ENCODE measurements at regions of chr19 and their contacts with region 1.

Region 1: DNA sequence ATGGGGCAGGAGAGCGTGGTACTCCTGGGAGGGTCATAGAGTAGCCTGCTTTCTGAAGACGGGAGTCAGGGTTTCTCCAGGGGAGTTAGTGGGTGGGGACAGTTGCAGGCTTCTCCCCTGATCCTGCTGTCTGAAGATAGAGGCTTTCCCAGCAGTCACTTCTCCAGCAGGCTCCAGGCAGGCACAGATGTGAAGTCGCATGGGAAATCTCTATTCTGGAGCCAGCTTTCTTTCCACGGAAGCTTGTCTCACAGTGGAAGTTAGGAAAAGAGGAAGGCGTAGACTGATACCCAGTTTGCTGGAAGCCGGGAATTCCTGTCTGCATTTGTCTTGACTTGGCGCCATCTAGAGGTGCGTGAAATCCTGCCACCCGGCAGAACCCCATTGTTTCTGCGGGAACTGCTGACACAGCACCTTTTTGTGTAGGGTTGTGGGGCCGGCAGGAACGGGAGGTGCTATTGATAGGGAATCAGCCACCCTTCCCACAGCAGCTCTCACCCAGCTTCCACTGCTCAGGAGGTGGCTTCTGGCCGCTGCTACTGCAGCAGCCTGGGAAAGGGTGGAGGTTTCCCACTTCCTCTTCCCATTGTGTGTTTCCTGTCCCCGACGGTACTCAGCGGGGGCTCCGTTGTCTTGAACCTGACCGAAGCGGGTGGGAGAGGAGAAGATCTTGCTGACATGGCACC is 28.5 kb upstream of the NPAS1 start:
- DNase-seq: peak; percentile 83
- ATAC-seq: peak; percentile 83

Region 2: GRCh38 chr19:46759817-46760333 is 231.3 kb before region 1 on chr19:
- intact Hi-C with region 1: loop called (anchors 5 kb)
- DNase-seq: no peak
- ATAC-seq: peak; percentile 40

Region 3: GRCh38 chr19:46924874-46925547 is 66.1 kb before region 1 on chr19:
- intact Hi-C with region 1: loop called (anchors 5 kb)
- DNase-seq: no peak
- ATAC-seq: peak; percentile 41

Region 4: GRCh38 chr19:46954993-46955812 is 35.9 kb before region 1 on chr19:
- intact Hi-C with region 1: no loop called
- DNase-seq: no peak
- ATAC-seq: no peak

Region 5: GRCh38 chr19:47075179-47075810 is 84.2 kb after region 1 on chr19:
- intact Hi-C with region 1: no loop called
- DNase-seq: peak; percentile 85
- ATAC-seq: no peak